ENCODE measurements at regions of chr3 and their contacts with region 1.

Region 1: DNA sequence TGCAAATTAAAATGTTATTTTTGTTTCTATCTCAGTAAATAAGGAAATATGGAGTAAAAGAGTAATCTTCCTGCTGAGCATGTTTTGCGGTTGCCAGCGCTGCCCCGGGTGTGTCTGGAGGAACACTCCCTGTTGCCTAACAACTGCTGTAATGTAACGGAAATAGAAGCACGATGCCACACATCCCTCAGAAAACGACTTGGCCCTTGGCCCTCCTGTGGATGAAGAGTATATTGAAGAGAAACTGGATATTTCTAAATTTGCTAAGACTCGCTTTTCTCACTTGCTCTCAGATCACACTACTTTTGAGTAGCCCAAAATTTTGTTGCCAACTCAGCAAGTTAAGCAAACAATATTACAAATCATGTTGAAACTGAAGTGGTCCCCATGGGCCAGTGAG is 18.9 kb downstream of the CX3CR1 start:
- DNase-seq: peak; percentile 85 to 91
- ATAC-seq: peak; percentile 100
- H3K4me3 ChIP-seq: peak overlapping the region in 1 of 4 donors; percentile 16
- H3K27ac ChIP-seq: peak overlapping the region; percentile 63 to 77 (median 72)
- H3K4me1 ChIP-seq: peaks cover 28 to 43% of the 10 kb centered on the region in 2 donors
- H3K27me3 ChIP-seq: no peaks in the 10 kb centered on the region
- CTCF ChIP-seq: peak; percentile 60 to 81 (median 67)
- POLR2A ChIP-seq: no peak

Region 2: DNA sequence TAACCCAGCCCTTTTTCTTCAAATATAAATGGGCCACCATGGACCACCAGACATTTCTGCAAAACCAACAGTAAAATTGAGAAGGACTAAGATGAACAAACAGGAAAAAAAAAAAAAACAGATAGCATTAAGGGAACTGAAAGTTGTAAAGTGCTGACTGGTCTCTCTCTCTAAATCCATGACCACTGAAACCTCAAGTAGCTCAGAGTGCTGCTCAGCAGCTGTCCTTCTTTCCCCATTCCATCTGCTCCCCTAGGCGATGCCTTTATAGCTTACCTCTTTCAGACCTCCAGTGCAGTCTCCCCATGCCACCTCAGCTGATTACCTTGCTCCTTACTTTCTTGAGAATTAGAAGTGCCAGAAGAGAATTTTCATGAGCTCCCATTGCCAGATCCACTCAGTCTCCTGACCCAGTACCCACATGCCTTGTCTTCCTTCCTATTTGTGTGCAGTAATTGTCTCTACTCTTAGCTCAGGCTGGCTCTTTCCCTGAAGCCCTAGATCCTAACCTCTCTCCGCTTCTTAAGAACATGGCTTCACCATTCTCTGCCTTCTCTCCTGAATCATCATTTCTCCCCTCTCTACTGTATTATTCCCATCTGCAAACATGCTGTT is 44.7 kb before region 1 on chr3:
- in situ Hi-C with region 1: loop called in 1 of 4 experiments (anchors 10 kb)
- intact Hi-C with region 1: no loop called
- DNase-seq: no peak
- ATAC-seq: no peak
- H3K4me3 ChIP-seq: no peak overlapping the region
- H3K27ac ChIP-seq: no peak overlapping the region
- H3K4me1 ChIP-seq: no peaks in the 10 kb centered on the region
- H3K27me3 ChIP-seq: no peaks in the 10 kb centered on the region
- CTCF ChIP-seq: no peak
- POLR2A ChIP-seq: no peak

Region 3: GRCh38 chr3:39639344-39640236 is 378.6 kb after region 1 on chr3:
- in situ Hi-C with region 1: no loop called
- intact Hi-C with region 1: no loop called
- DNase-seq: no peak
- ATAC-seq: no peak
- H3K4me3 ChIP-seq: no peak overlapping the region
- H3K27ac ChIP-seq: no peak overlapping the region
- H3K4me1 ChIP-seq: no peaks in the 10 kb centered on the region
- H3K27me3 ChIP-seq: no peaks in the 10 kb centered on the region
- CTCF ChIP-seq: no peak
- POLR2A ChIP-seq: no peak